WTC11 (cell line): ENCODE measurements at regions of chr6 and their contacts with region 1.

Region 1: DNA sequence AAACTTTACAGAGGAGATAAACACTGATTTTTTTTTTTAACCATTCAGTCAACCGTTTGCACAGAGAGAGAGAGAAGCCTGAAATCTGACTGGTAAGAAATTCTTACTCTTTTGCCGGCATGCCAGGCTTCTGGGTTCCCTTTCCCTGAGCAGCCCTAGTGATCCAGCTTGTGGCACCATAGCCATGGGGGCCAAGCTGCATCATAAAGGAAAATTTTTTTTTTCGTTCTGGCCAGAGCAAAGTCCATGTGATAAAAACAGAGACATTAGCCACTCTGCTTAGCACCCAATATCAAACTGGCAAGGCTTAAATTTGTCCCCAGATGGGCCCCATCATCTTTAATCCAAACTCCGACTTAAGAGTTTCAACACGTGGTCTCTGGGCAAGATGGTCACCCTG is 44.5 kb downstream of the CEP85L start:
- DNase-seq: no peak
- ATAC-seq: no peak
- H3K4me3 Mint-ChIP-seq: no peak overlapping the region
- H3K27ac Mint-ChIP-seq: no peak overlapping the region; the same call in 1 of the 2 replicates
- H3K4me1 Mint-ChIP-seq: 0 out of 2 replicates have a peak, but pooled peaks cover 2% of the 10 kb centered on the region
- H3K27me3 Mint-ChIP-seq: no peaks in the 10 kb centered on the region
- CTCF ChIP-seq: no peak

Region 2: DNA sequence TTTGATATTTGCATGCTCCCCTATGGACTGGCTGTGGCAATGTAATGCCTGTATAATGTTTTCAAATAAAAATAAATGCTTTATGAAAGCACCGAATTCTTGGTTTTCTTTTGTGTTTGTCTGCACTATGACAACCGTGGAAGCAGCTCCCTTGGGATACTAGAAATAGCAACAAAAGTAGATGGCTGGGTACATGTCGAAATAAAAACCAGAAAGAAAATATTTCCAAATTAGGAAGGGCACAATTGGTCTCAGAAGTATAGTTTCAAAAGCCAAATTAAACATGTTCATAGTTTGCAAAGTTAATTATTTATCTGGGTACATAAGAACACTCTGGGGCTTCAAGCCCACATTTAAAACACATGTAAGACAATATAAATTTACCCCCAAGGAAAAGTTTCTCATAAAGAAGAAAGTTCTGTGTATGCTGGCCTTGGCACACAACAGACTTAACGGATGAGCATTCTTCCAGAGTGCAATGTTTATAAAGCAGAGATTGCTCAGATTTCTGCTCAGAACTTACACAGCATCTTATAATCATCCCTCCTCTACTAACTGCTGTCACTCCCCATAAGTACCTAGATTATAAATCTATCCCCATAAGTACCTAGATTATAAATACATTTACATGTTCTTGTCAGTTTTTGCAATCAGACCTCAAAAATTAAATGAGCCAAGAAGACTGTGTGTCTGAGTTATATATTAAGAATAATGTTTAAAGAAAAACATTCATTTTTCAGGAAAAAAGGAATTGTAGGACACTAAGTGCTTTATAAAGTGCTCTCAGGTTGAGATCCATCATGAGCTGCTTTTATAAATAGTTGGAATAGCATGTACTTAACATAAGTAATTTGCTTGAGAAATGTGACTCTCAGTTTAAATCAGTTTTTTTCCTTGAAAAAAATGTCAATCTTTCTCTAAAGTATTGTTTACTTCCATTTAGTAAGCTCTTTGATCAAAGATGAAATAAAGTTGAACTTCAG is 289.0 kb before region 1 on chr6:
- CTCF ChIA-PET with region 1: no interaction called
- POLR2A ChIA-PET with region 1: interaction called, 10 read pairs
- DNase-seq: no peak
- ATAC-seq: no peak
- H3K4me3 Mint-ChIP-seq: no peak overlapping the region
- H3K27ac Mint-ChIP-seq: no peak overlapping the region
- H3K4me1 Mint-ChIP-seq: peaks cover 14% of the 10 kb centered on the region; the same call in 1 of the 2 replicates
- H3K27me3 Mint-ChIP-seq: no peaks in the 10 kb centered on the region
- CTCF ChIP-seq: no peak

Region 3: GRCh38 chr6:118589649-118590365 is 17.1 kb before region 1 on chr6:
- CTCF ChIA-PET with region 1: no interaction called
- POLR2A ChIA-PET with region 1: no interaction called
- DNase-seq: no peak
- ATAC-seq: no peak; the same call in 1 of the 2 replicates
- H3K4me3 Mint-ChIP-seq: no peak overlapping the region
- H3K27ac Mint-ChIP-seq: peak overlapping the region; percentile 27; the same call in 1 of the 2 replicates
- H3K4me1 Mint-ChIP-seq: peaks cover 30% of the 10 kb centered on the region
- H3K27me3 Mint-ChIP-seq: no peaks in the 10 kb centered on the region
- CTCF ChIP-seq: no peak